Endothelial cell of umbilical vein (primary cell): ENCODE measurements at regions of chr11 and their contacts with region 1.

Region 1: DNA sequence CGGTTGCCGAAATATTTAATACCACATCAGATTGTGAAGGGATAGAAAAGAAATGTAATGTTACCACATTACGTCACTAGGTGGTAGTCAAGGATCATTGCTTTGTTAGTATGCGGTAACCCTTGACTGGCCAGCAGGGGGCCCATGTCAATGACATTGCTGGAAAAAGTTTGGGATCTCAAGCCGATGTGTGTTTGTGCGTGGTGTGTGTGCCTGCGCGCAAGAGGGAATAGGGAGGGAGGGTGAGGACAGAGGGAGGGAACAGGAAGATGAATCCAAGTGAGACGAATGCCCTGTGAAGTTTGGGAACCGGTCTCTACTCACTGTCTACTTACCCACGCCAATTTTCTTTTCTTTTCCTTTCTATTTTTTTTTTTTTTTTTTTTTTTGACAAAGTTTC is 10.7 kb upstream of the MRGPRX2 start:
- DNase-seq: peak; percentile 84
- H3K4me3 ChIP-seq: no peak overlapping the region
- H3K27ac ChIP-seq: no peak overlapping the region
- H3K4me1 ChIP-seq: no peaks in the 10 kb centered on the region
- H3K27me3 ChIP-seq: peaks cover 13 to 23% of the 10 kb centered on the region in 2 experiments
- CTCF ChIP-seq: peak; percentile 89 to 98
- POLR2A ChIP-seq: no peak

Region 2: DNA sequence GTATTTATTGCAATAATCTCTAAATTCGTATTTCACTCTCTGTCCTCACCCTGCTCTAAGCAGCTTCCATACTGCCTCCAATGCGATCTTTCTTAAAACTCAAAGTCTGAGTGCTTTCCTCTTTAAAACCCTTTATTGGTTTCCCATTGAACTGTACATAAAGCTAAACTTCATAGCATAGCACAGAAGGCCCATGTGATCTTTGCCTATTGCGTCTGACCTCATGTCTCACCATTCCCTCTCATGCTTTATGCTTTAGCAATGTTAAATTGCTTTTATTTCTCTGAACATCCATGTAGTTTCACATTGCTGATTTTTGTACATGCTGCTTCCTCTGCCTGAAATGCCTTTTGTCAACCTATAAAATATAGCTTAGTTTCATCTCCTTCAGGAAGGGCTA is 74.1 kb after region 1 on chr11:
- CTCF ChIA-PET with region 1: interaction called, 105 read pairs
- POLR2A ChIA-PET with region 1: no interaction called
- dilution Hi-C with region 1: no loop called
- intact Hi-C with region 1: loop called (anchors 2 kb)
- DNase-seq: no peak
- H3K4me3 ChIP-seq: no peak overlapping the region
- H3K27ac ChIP-seq: no peak overlapping the region
- H3K4me1 ChIP-seq: no peaks in the 10 kb centered on the region
- H3K27me3 ChIP-seq: no peaks in the 10 kb centered on the region
- CTCF ChIP-seq: no peak
- POLR2A ChIP-seq: no peak

Region 3: DNA sequence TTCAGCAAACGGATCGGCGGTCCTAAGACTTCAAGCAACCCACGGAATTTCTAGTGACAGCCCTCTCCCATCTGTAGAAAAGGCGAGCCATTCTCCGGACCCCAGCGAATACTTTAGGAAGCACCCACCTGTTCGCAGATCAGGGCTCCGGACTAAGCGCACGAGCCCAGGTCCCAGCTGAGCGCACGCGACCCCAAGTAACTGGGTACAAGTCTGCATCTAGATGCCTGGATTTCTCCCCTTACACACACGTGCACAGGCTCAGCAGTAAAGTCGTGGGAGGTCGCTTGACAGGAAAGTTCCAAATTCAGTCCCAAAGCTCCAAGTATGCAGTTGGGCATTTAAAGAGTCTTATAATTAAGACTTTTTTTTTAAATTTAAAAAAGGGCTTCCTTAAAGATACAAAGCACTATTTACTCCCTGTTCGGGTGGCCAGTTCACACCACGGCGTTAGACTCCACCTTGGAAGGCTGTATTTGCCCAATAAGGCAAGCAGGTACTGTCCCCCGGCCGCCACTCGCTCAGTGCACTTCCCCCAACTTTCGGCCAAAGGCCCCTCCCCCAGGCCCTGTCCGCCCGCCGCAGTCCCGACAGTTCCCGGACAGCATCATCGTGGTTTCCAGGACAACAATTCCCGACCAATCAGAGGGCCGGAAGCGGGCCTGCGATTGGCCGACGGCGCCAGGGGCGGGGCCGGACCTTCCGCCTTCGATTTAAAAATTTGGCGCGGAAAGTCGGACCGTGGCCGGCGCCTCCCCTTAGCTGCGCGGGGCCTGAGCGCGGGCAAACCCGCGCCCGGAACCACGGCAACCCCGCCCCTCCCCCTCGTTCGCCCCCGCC is 169.4 kb after region 1 on chr11 and contains the start of gene E2F8:
- CTCF ChIA-PET with region 1: interaction called, 15 read pairs
- POLR2A ChIA-PET with region 1: no interaction called
- dilution Hi-C with region 1: no loop called
- intact Hi-C with region 1: loop called (anchors 1 kb)
- DNase-seq: peak; percentile 96
- H3K4me3 ChIP-seq: peak within 1 kb of the TSS; percentile 88 to 92 (median 88)
- H3K27ac ChIP-seq: peak within 1 kb of the TSS; percentile 44
- H3K4me1 ChIP-seq: peaks cover 22% of the 10 kb centered on the region
- H3K27me3 ChIP-seq: no peaks in the 10 kb centered on the region
- CTCF ChIP-seq: no peak
- POLR2A ChIP-seq: peak; percentile 41
- total RNA-seq, gene E2F8: 16.5 and 19.1 TPM in 2 replicates

Region 4: GRCh38 chr11:19326499-19326898 is 255.2 kb after region 1 on chr11:
- CTCF ChIA-PET with region 1: interaction called, 28 read pairs
- POLR2A ChIA-PET with region 1: no interaction called
- dilution Hi-C with region 1: no loop called
- intact Hi-C with region 1: no loop called
- DNase-seq: peak; percentile 47
- H3K4me3 ChIP-seq: no peak overlapping the region
- H3K27ac ChIP-seq: no peak overlapping the region
- H3K4me1 ChIP-seq: no peaks in the 10 kb centered on the region
- H3K27me3 ChIP-seq: peaks cover 0 to 5% of the 10 kb centered on the region in 2 experiments
- CTCF ChIP-seq: peak; percentile 17
- POLR2A ChIP-seq: no peak

Region 5: DNA sequence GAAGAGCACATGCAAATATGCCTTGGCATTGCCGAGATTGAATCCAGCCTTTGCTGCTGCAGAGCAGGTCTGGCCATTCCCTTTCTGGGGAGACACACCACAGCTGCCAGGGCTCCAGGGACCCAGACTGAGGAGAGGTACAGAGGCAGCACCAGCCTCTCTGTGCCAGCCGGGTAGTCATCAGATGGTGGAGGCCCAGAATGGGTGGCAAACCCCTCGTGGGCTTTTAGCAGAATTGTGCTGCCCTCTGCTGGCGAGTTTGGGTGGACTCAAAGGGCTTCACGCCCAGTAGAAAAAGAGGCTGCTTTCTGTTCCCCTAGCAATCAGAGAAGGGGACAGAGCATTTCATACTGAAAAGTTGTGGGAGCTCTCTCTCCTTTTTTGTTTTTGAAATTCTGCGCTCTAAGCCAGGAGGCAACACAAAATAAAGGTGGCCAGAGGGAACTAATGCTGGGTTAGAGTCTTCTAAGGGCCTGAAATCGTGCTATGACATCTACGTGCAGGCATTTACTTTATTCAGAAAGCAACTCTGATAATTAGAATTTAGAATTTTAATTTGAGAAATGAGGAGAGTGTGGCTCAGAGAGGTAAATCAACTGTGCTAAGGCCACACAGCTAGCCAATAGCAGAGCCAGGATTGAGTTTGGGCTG is 482.6 kb after region 1 on chr11:
- CTCF ChIA-PET with region 1: interaction called, 72 read pairs
- POLR2A ChIA-PET with region 1: no interaction called
- dilution Hi-C with region 1: no loop called
- intact Hi-C with region 1: loop called (anchors 1 kb)
- DNase-seq: peak; percentile 65
- H3K4me3 ChIP-seq: no peak overlapping the region
- H3K27ac ChIP-seq: no peak overlapping the region
- H3K4me1 ChIP-seq: no peaks in the 10 kb centered on the region
- H3K27me3 ChIP-seq: no peaks in the 10 kb centered on the region
- CTCF ChIP-seq: peak; percentile 79 to 81
- POLR2A ChIP-seq: no peak